ENCODE measurements at regions of chr6 and their contacts with region 1.

Region 1: GRCh38 chr6:8780653-8781052 is 345.3 kb upstream of the SLC35B3 start:
- DNase-seq: no peak
- H3K4me3 ChIP-seq: no peak overlapping the region
- H3K27ac ChIP-seq: no peak overlapping the region
- H3K4me1 ChIP-seq: no peaks in the 10 kb centered on the region
- H3K27me3 ChIP-seq: no peaks in the 10 kb centered on the region
- CTCF ChIP-seq: no peak
- POLR2A ChIP-seq: no peak

Region 2: GRCh38 chr6:8821981-8822381 is 41.3 kb after region 1 on chr6:
- intact Hi-C with region 1: no loop called
- DNase-seq: no peak
- H3K4me3 ChIP-seq: no peak overlapping the region
- H3K27ac ChIP-seq: no peak overlapping the region
- H3K4me1 ChIP-seq: no peaks in the 10 kb centered on the region
- H3K27me3 ChIP-seq: no peaks in the 10 kb centered on the region
- CTCF ChIP-seq: no peak
- POLR2A ChIP-seq: no peak

Region 3: DNA sequence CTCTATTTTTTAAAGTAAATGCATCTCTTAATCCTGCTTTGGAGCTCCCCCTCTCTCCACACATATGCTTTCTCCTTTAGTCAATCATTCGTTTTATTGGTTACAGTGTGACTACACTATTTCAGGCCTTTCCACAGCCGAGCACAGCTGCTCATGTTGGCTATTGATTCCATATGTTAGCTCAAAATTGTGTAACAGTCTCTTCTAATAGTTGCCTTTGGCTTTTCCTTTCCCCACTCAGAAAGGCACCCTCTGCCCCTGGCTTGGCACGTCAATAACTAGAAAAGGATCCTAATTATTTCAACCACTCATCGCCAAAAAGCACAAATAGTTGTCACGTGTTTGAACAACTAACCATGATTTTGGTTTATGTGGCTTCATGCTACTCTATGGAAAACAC is 65.0 kb after region 1 on chr6:
- intact Hi-C with region 1: no loop called
- DNase-seq: no peak
- H3K4me3 ChIP-seq: no peak overlapping the region
- H3K27ac ChIP-seq: no peak overlapping the region
- H3K4me1 ChIP-seq: no peaks in the 10 kb centered on the region
- H3K27me3 ChIP-seq: no peaks in the 10 kb centered on the region
- CTCF ChIP-seq: no peak
- POLR2A ChIP-seq: no peak

Region 4: GRCh38 chr6:9370480-9370879 is 589.8 kb after region 1 on chr6:
- intact Hi-C with region 1: loop called (anchors 5 kb)
- DNase-seq: no peak
- H3K4me3 ChIP-seq: no peak overlapping the region
- H3K27ac ChIP-seq: no peak overlapping the region
- H3K4me1 ChIP-seq: no peaks in the 10 kb centered on the region
- H3K27me3 ChIP-seq: no peaks in the 10 kb centered on the region
- CTCF ChIP-seq: no peak
- POLR2A ChIP-seq: no peak